ENCODE measurements at regions of chr6 and their contacts with region 1.

Region 1: GRCh38 chr6:170554013-170554795 is at the start of gene TBP:
- DNase-seq: peak; percentile 99
- ATAC-seq: peak; percentile 93
- H3K4me3 ChIP-seq: peak within 1 kb of the TSS; percentile 91 to 99
- H3K27ac ChIP-seq: peak within 1 kb of the TSS; percentile 79
- H3K4me1 ChIP-seq: peaks cover 12 to 16% of the 10 kb centered on the region in 2 experiments
- H3K27me3 ChIP-seq: no peaks in the 10 kb centered on the region
- CTCF ChIP-seq: no peak
- POLR2A ChIP-seq: peak; percentile 62
- RAD21 ChIP-seq: no peak
- total RNA-seq, gene TBP: 22.7 TPM

Region 2: GRCh38 chr6:169701954-169702839 is 852.0 kb before region 1 on chr6 and contains the starts of genes C6orf120 and WDR27:
- CTCF ChIA-PET with region 1: no interaction called
- POLR2A ChIA-PET with region 1: no interaction called
- RAD21 ChIA-PET with region 1: no interaction called
- intact Hi-C with region 1: loop called (anchors 2 kb)
- DNase-seq: peak; percentile 91
- ATAC-seq: peak; percentile 90
- H3K4me3 ChIP-seq: peak within 1 kb of the TSS; percentile 94 to 98
- H3K27ac ChIP-seq: peak within 1 kb of the TSS; percentile 99
- H3K4me1 ChIP-seq: peaks cover 19 to 20% of the 10 kb centered on the region in 2 experiments
- H3K27me3 ChIP-seq: no peaks in the 10 kb centered on the region
- CTCF ChIP-seq: no peak
- POLR2A ChIP-seq: peak; percentile 52
- RAD21 ChIP-seq: no peak
- total RNA-seq, gene C6orf120: 20.6 TPM
- total RNA-seq, gene WDR27: 60.6 TPM

Region 3: DNA sequence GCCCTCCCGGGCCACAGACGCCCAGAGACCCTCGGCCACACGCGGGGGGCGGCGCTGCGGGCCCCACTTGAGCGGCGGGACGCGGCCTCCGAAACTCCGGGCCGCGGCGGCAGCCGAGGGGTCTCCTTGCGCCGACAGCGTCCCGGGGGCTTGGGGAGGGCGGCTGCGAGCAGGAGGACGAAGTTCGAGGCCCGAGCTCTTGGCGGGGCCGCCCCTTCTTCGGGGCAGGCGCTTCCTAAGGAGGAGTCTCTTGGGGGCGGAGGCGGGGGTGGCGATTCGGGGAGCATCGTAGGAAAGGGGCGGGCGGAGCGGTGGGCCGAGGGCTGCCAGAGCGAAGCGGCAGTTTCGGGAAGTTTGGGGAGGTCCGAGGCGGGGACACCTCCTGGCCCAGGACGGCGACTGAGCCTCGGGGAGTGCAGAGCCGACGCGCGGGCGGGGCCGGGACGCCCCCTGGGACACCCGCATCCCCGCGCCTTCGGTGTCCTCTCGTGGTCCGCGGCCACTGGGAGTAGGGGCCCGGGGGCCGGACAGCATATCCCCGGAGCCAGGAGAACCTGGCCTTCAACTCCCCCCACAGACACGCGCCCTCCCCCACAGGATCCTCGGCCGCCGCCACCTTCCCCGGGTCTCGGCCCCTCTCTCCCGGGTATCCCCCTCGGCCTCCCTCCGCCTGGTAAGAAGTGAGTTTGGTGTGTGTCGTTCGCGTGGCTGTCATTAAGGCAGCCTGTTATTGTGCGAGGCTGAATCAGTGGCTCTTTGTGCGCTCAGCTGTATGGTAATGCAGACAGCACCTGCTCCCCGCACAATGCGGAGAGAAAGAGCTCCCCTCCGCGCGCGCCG is 262.7 kb before region 1 on chr6:
- CTCF ChIA-PET with region 1: no interaction called
- POLR2A ChIA-PET with region 1: no interaction called
- RAD21 ChIA-PET with region 1: no interaction called
- intact Hi-C with region 1: no loop called
- DNase-seq: no peak
- ATAC-seq: peak; percentile 25; the same call in 1 of the 2 replicates
- H3K4me3 ChIP-seq: peak overlapping the region; percentile 47 to 67
- H3K27ac ChIP-seq: peak overlapping the region; percentile 27; the same call in 1 of the 2 replicates
- H3K4me1 ChIP-seq: peaks cover 4 to 21% of the 10 kb centered on the region in 2 experiments; a peak in 3 of 4 replicates
- H3K27me3 ChIP-seq: peaks cover 4% of the 10 kb centered on the region; the same call in 1 of the 2 replicates
- CTCF ChIP-seq: no peak
- POLR2A ChIP-seq: no peak
- RAD21 ChIP-seq: no peak

Measured in HCT116 (cell line).